Heart left ventricle (tissue), 16 donors: ENCODE measurements at regions of chr18 and their contacts with region 1.

Region 1: GRCh38 chr18:21031845-21032244 is 79.8 kb downstream of the ROCK1 start:
- DNase-seq: no peak
- ATAC-seq: no peak
- H3K4me3 ChIP-seq: no peak overlapping the region
- H3K27ac ChIP-seq: no peak overlapping the region
- H3K4me1 ChIP-seq: no peaks in the 10 kb centered on the region
- H3K27me3 ChIP-seq: no peaks in the 10 kb centered on the region
- CTCF ChIP-seq: no peak
- POLR2A ChIP-seq: no peak

Region 2: DNA sequence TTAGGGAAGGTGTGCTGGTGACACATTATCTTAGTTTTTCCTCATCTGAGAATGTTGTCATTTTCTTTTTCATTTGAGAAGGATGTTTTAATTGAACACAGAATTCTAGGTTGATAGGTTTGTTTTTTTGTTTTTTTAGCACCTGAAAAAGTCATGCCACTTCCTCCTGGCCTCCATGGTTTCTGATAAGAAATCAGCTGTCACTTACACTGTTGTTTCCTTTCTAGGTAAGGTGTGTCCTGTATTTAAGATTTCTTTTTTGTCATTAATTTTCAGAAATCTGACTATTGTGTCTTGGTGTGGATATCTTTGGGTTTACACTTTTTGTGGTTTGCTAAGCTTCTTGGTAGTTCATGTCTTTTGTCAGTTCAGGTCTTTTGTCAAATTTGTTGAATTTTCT is 19.5 kb before region 1 on chr18:
- intact Hi-C with region 1: no loop called
- DNase-seq: no peak
- ATAC-seq: no peak
- H3K4me3 ChIP-seq: no peak overlapping the region
- H3K27ac ChIP-seq: no peak overlapping the region
- H3K4me1 ChIP-seq: no peaks in the 10 kb centered on the region
- H3K27me3 ChIP-seq: no peaks in the 10 kb centered on the region
- CTCF ChIP-seq: no peak
- POLR2A ChIP-seq: no peak

Region 3: DNA sequence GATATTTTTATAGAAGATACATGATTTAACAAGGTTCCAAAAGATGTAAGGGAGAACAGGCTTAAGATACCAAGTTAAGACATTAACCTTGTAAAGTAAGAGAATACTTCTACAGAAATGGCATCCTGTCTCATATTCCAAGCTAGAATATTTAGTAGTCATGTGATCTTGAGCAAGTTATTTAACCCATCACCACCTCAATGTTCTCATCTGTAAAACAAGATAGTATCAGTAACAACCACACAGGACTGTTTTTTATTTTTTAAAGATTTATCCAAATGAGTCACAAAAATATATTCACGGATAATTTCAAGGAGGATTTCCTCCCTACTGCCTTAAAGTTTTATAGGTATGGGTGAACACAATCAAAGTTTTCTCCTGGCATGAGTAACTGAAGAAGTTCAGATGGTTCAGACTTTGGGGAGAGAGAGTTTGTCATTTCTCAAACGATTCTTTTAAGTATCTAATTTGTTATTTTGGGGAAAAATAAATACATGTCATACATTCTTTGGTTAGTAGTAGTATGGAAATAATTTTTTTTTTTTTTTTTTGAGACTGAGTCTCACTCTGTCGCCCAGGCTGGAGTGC is 53.8 kb after region 1 on chr18:
- intact Hi-C with region 1: loop called in 2 of 10 experiments (anchors 10 kb)
- DNase-seq: no peak
- ATAC-seq: no peak
- H3K4me3 ChIP-seq: no peak overlapping the region
- H3K27ac ChIP-seq: no peak overlapping the region
- H3K4me1 ChIP-seq: peaks cover 0 to 28% (median 0%) of the 10 kb centered on the region in 12 donors
- H3K27me3 ChIP-seq: no peaks in the 10 kb centered on the region
- CTCF ChIP-seq: no peak
- POLR2A ChIP-seq: no peak

Region 4: DNA sequence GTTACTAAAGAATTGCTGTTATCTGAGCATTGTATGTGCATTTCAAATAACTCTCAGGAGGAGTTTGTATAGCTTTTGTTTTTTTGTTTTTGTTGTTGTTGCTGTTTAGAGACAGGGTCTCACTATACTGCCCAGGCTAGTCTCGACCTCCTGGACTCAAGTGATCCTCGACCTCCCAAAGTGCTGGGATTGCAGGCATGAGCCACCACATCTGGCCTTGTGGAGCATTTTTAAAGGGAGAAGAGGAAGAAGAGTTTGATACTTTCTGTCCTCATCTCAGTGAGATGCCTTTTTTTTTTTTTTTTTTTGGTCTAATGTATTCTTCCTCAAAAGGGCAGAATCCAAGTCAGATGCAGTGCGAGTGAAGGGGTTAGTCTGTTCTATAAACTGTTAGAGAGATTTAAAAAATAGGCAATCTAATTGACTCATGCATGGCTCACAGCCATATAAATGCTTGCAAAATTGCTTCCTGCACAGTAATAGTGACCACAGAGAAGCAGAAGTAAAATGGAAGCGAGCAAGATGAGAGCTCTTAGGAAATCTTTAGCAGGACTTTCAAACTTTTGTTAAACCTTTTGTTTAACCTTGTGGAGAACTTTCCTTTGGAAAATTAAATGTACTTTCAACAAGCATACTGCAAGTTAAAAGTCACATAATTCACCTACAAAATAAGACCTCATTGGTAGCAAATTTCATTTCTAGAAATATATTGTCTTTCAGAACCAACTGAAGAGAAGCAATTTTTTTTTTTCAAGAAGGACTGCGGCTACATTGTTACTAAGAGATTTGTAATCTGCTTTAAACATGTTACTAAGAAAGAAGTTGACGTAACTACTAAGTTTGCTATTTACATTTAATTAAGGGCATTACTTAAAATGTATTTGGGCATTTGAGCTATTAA is 132.1 kb after region 1 on chr18:
- intact Hi-C with region 1: no loop called
- DNase-seq: no peak
- ATAC-seq: peak; percentile 51 to 80 (median 78)
- H3K4me3 ChIP-seq: no peak overlapping the region
- H3K27ac ChIP-seq: peak overlapping the region in 3 of 12 donors; percentile 22 to 84 (median 25)
- H3K4me1 ChIP-seq: peaks cover 0 to 24% (median 0%) of the 10 kb centered on the region in 12 donors
- H3K27me3 ChIP-seq: no peaks in the 10 kb centered on the region
- CTCF ChIP-seq: no peak
- POLR2A ChIP-seq: no peak